H1 (cell line): ENCODE measurements at regions of chr2 and their contacts with region 1.

Region 1: GRCh38 chr2:11129598-11130449 is 25.4 kb upstream of the SLC66A3 start:
- DNase-seq: peak; percentile 76 to 97
- H3K4me3 ChIP-seq: peak overlapping the region; percentile 32 to 56 (median 46); a peak in 7 of 8 replicates
- H3K27ac ChIP-seq: no peak overlapping the region
- H3K4me1 ChIP-seq: peaks cover 3 to 11% (median 6%) of the 10 kb centered on the region in 4 experiments
- H3K27me3 ChIP-seq: no peaks in the 10 kb centered on the region; a peak in 2 of 7 replicates
- CTCF ChIP-seq: peak; percentile 58 to 72 (median 67)
- EP300 ChIP-seq: peak in 1 of 2 experiments; percentile 54; a peak in 1 of 3 replicates
- POLR2A ChIP-seq: no peak
- RAD21 ChIP-seq: peak; percentile 74 to 80

Region 2: GRCh38 chr2:10911261-10912075 is 218.4 kb before region 1 on chr2 and contains the start of gene KCNF1:
- CTCF ChIA-PET with region 1: interaction called, 35 read pairs
- POLR2A ChIA-PET with region 1: no interaction called
- DNase-seq: no peak
- H3K4me3 ChIP-seq: peak within 1 kb of the TSS; percentile 32 to 64 (median 46)
- H3K27ac ChIP-seq: no peak within 1 kb of the TSS
- H3K4me1 ChIP-seq: peaks cover 3 to 28% (median 10%) of the 10 kb centered on the region in 4 experiments
- H3K27me3 ChIP-seq: peaks cover 13 to 40% (median 29%) of the 10 kb centered on the region in 4 experiments; a peak in 6 of 7 replicates
- CTCF ChIP-seq: peak in 2 of 3 experiments; percentile 19 to 34; a peak in 2 of 4 replicates
- EP300 ChIP-seq: no peak
- POLR2A ChIP-seq: no peak
- RAD21 ChIP-seq: peak; percentile 36 to 39
- total RNA-seq, gene KCNF1: 0.48 and 0.90 TPM in 2 replicates

Region 3: DNA sequence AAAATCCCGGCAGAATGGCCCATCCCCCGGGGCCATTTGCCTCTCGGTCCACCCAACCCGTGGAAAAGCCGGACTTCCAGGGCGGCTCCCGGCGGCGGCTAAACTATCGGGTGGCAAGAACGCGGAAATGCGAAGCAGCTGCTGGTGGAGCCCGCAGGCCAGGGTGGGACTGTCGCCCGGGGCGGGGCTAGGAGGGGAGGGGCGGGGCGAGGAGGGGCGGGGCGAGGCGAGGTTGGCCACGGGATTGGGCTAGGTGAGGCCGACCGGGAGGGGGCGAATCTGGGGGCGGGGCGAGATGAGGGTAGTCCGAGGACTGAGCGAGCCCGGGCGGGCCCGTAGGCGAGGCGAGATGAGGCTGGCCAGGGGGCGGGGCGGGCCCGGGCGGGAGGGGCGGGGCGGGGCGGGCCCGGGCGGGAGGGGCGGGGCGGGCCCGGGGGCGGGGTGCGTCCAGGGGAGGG is 25.1 kb after region 1 on chr2:
- CTCF ChIA-PET with region 1: interaction called, 111 read pairs
- POLR2A ChIA-PET with region 1: interaction called, 20 read pairs
- DNase-seq: peak; percentile 81 to 96
- H3K4me3 ChIP-seq: peak overlapping the region; percentile 24 to 62 (median 33); a peak in 7 of 8 replicates
- H3K27ac ChIP-seq: 0 out of 2 replicates have a peak overlapping the region, but pooled peaks have one; percentile 61
- H3K4me1 ChIP-seq: peaks cover 0 to 5% (median 4%) of the 10 kb centered on the region in 4 experiments; a peak in 5 of 7 replicates
- H3K27me3 ChIP-seq: peaks cover 0 to 13% (median 10%) of the 10 kb centered on the region in 4 experiments; a peak in 5 of 7 replicates
- CTCF ChIP-seq: no peak
- EP300 ChIP-seq: no peak
- POLR2A ChIP-seq: peak in 1 of 2 experiments; percentile 12; a peak in 1 of 3 replicates
- RAD21 ChIP-seq: no peak

Region 4: GRCh38 chr2:11187083-11187619 is 57.3 kb after region 1 on chr2:
- CTCF ChIA-PET with region 1: interaction called, 13 read pairs
- POLR2A ChIA-PET with region 1: interaction called, 3 read pairs
- DNase-seq: no peak
- H3K4me3 ChIP-seq: no peak overlapping the region
- H3K27ac ChIP-seq: no peak overlapping the region
- H3K4me1 ChIP-seq: no peaks in the 10 kb centered on the region; a peak in 1 of 7 replicates
- H3K27me3 ChIP-seq: no peaks in the 10 kb centered on the region
- CTCF ChIP-seq: no peak
- EP300 ChIP-seq: no peak
- POLR2A ChIP-seq: no peak
- RAD21 ChIP-seq: no peak

Region 5: DNA sequence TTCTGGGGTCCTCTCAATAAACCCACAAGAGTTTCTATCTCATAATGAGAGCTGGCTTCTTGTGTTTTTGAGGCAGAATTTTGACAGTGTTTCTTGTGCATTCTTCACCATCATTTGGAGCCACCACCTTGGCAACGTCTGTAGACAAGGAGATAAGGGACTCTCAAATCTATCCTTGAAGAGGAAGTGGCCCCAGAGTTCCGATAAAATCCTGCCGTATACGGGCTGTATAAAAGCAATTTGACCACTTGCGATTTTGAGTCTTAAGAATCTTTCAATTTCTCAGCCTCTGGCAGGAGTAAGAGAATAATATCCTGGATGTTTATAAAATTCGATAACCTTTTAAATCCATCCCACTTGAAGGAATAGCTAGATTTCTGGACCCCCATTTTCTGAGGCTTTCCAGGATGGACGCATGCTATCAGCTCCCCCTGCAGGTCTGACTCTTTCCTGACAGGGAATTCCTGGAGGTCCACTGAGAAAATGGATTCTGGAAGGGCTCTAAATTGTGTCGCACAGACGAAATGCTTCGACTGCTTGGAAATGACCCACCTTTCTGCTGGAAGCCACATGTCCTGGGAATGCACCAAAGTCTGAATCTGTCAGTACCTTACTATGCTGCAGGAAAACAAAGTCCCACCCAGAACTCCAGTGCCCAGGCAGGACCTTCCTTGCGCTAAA is 282.1 kb after region 1 on chr2:
- CTCF ChIA-PET with region 1: interaction called, 54 read pairs
- POLR2A ChIA-PET with region 1: no interaction called
- DNase-seq: peak in 1 of 2 experiments; percentile 65
- H3K4me3 ChIP-seq: no peak overlapping the region
- H3K27ac ChIP-seq: no peak overlapping the region
- H3K4me1 ChIP-seq: no peaks in the 10 kb centered on the region
- H3K27me3 ChIP-seq: no peaks in the 10 kb centered on the region
- CTCF ChIP-seq: peak; percentile 65 to 84 (median 80)
- EP300 ChIP-seq: no peak
- POLR2A ChIP-seq: no peak
- RAD21 ChIP-seq: peak; percentile 91 to 93

Region 6: GRCh38 chr2:11465497-11466406 is 335.9 kb after region 1 on chr2 and contains the start of gene E2F6:
- CTCF ChIA-PET with region 1: interaction called, 28 read pairs
- POLR2A ChIA-PET with region 1: no interaction called
- DNase-seq: peak; percentile 73 to 98
- H3K4me3 ChIP-seq: peak within 1 kb of the TSS; percentile 23 to 53 (median 38); a peak in 7 of 8 replicates
- H3K27ac ChIP-seq: no peak within 1 kb of the TSS
- H3K4me1 ChIP-seq: 0 out of 7 replicates have a peak, but pooled peaks cover 0 to 2% (median 0%) of the 10 kb centered on the region in 4 experiments
- H3K27me3 ChIP-seq: peaks cover 0 to 10% (median 4%) of the 10 kb centered on the region in 4 experiments; a peak in 5 of 7 replicates
- CTCF ChIP-seq: no peak
- EP300 ChIP-seq: peak in 1 of 2 experiments; percentile 73; a peak in 1 of 3 replicates
- POLR2A ChIP-seq: peak in 1 of 2 experiments; percentile 43; a peak in 2 of 3 replicates
- RAD21 ChIP-seq: peak in 1 of 2 experiments; percentile 4; a peak in 1 of 4 replicates
- total RNA-seq, gene E2F6: 14.9 and 15.6 TPM in 2 replicates